MCF 10A (cell line): ENCODE measurements at regions of chr12 and their contacts with region 1.

Region 1: DNA sequence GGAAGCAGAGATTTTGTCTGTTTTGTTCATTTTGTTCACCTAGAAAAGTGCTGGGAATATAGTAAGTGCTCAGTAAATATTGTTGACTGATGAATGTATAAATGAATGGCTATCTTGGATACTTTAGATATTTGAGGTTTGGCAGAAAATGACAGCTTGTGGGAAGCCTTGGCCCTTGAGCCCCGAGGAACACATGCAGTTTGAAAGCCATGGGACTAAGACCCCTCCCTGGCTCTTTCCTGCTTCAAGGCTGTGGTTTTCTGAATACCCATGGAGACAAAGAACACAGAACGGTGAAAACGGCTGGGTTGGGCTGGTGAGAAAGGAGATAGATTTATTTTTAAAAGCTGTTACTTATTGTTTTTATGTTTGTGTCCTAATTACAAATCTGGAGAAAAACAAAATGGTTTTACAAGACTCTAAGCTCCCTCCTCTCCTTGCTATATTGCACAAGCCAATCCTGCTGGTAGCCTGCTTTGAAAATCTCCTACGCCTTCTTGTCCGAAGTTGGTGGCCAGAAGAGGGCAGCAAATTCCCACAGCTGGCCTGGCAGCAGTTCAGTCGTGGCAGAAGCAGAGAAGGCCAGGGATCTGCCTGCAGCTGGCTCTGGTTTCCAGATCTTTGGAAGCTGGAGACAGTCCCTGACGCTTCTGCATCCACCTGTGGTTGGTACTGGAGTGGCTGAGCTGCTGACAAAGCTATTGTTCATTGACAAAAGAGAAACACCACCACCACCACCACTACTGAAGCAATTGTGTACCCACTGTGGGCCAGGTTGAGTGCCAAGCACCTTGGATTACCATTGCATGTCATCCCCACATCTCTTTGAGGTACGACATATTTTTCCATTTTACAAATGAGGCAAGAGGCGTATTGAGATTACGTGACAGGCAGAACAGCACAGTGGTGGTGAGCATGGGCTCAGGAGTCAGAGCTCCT is 5.2 kb upstream of the KRT85 start:
- DNase-seq: peak; percentile 86
- H3K4me3 Mint-ChIP-seq: no peak overlapping the region
- H3K27ac Mint-ChIP-seq: no peak overlapping the region
- H3K4me1 Mint-ChIP-seq: no peaks in the 10 kb centered on the region
- H3K27me3 Mint-ChIP-seq: peaks cover 11% of the 10 kb centered on the region
- CTCF ChIP-seq: peak; percentile 90

Region 2: GRCh38 chr12:52147367-52147972 is 225.0 kb before region 1 on chr12:
- CTCF ChIA-PET with region 1: interaction called, 20 read pairs
- POLR2A ChIA-PET with region 1: interaction called, 5 read pairs
- intact Hi-C with region 1: loop called (anchors 5 kb)
- DNase-seq: peak; percentile 98
- H3K4me3 Mint-ChIP-seq: peak overlapping the region; percentile 39
- H3K27ac Mint-ChIP-seq: peak overlapping the region; percentile 97
- H3K4me1 Mint-ChIP-seq: peaks cover 76% of the 10 kb centered on the region
- H3K27me3 Mint-ChIP-seq: no peaks in the 10 kb centered on the region
- CTCF ChIP-seq: no peak

Region 3: GRCh38 chr12:52230327-52231291 is 141.9 kb before region 1 on chr12:
- CTCF ChIA-PET with region 1: no interaction called
- POLR2A ChIA-PET with region 1: no interaction called
- intact Hi-C with region 1: loop called (anchors 5 kb)
- DNase-seq: peak; percentile 86
- H3K4me3 Mint-ChIP-seq: peak overlapping the region; percentile 91
- H3K27ac Mint-ChIP-seq: peak overlapping the region; percentile 91
- H3K4me1 Mint-ChIP-seq: peaks cover 54% of the 10 kb centered on the region
- H3K27me3 Mint-ChIP-seq: no peaks in the 10 kb centered on the region
- CTCF ChIP-seq: no peak

Region 4: GRCh38 chr12:52362118-52362726 is 10.3 kb before region 1 on chr12:
- CTCF ChIA-PET with region 1: interaction called, 37 read pairs
- POLR2A ChIA-PET with region 1: no interaction called
- intact Hi-C with region 1: no loop called
- DNase-seq: peak; percentile 19
- H3K4me3 Mint-ChIP-seq: no peak overlapping the region
- H3K27ac Mint-ChIP-seq: no peak overlapping the region
- H3K4me1 Mint-ChIP-seq: no peaks in the 10 kb centered on the region
- H3K27me3 Mint-ChIP-seq: peaks cover 9% of the 10 kb centered on the region
- CTCF ChIP-seq: peak; percentile 18

Region 5: DNA sequence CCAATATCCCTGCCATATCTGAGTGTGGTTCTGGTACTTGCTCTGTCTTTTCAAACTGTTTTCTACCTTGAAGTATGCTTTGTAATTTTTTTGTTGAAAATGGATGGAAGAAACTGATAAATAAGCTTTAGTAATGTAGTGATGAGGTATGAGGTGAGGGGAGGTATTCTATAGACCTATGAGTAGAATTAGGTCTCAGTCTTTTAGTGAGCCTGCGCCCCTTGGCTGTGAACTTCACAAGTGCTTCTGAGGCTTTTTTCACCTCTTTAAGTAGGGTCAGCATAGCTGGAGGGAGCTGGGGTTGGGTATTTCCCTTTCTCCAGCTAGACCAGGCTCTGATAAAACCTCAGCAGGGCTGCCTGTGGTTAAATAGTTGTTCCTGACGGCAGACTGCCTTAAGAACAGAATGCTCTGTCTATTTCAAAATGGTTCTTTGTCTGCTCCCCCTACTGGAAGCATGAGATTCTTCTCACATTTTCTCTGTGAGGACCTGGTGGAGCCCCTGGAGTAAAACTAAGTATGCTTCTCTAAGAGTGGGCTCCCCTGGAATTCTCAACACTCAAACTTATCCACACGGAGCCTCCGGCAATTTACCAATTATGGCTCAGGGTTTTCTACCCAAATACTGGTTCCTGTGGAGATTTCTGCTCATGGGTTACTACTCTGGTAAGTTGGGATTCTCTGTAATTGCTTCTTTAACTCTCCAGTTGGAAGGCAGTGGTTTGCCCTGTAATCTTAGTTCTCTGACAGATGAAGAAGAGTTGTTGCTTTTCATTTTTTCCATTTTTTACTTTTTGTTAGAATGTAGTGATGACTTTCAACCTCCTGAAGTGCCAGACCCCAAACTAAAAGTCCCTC is 134.6 kb after region 1 on chr12:
- CTCF ChIA-PET with region 1: interaction called, 34 read pairs
- POLR2A ChIA-PET with region 1: interaction called, 23 read pairs
- intact Hi-C with region 1: no loop called
- DNase-seq: peak; percentile 75
- H3K4me3 Mint-ChIP-seq: no peak overlapping the region
- H3K27ac Mint-ChIP-seq: peak overlapping the region; percentile 4
- H3K4me1 Mint-ChIP-seq: peaks cover 18% of the 10 kb centered on the region
- H3K27me3 Mint-ChIP-seq: no peaks in the 10 kb centered on the region
- CTCF ChIP-seq: peak; percentile 50

Region 6: DNA sequence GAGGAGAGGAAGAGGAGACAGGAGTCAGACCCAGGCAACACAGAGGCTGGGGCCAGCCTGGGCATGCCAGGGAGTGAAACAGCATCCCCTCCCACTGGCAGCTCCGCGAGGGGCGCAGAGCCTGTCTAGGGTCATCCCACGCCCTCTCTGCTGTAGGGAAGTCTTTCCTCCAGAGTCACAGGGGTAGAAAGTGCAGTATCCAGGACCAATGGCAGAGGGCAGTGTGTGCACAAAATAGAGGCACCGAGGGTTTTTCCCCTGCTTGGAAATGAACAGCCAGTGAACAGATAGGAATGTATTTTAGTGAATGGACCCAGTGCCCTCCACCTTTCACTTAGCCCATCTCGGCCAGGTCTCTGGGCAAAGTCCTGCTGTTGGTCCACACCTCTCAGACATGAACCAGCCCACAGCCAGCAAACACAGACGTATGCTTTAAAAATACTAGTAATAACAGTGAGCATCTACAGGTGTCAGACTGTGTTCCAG is 210.5 kb after region 1 on chr12:
- CTCF ChIA-PET with region 1: interaction called, 10 read pairs
- POLR2A ChIA-PET with region 1: interaction called, 3 read pairs
- intact Hi-C with region 1: loop called (anchors 1 kb)
- DNase-seq: peak; percentile 82
- H3K4me3 Mint-ChIP-seq: no peak overlapping the region
- H3K27ac Mint-ChIP-seq: no peak overlapping the region
- H3K4me1 Mint-ChIP-seq: peaks cover 26% of the 10 kb centered on the region
- H3K27me3 Mint-ChIP-seq: no peaks in the 10 kb centered on the region
- CTCF ChIP-seq: peak; percentile 76